ENCODE measurements at regions of chr19 and their contacts with region 1.

Region 1: DNA sequence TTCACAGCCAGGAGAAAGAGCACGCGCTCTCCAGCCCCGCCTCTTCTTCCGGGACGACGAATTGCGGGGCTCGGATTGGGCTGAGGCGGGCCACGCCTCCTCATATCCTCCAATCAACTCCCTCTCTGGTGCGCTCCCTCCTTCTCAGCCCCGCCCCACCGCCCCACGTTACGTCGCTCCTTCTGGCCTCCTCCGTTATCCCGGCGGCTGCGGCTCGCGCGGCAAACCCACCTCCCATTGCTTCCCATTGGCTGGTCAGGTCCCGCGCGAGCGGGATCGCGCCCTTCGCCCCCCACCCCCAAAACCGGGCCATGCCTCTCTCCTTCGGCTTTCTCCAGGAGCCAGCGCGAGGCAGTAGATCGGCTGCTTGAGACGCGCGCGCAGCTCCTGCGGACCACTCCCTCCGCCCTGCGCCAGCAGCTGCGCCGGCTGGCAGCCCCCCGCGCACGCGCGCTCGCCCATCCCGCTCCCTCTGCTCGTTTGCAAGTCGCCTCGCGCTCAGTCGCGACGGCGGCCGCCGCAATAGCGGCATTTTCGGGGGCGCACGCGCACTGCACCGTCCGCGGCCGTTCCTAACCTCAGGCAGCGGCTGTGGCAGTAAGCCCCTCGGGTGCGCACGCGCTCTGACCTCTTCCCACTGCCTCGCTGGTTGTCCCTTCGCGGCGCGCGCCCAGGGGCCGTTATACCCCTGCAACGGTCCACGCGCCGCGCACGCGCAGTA is 512 bp upstream of the ARHGAP35 start:
- DNase-seq: peak; percentile 98 to 100
- ATAC-seq: peak; percentile 75 to 86
- H3K4me3 ChIP-seq: peak overlapping the region; percentile 94
- H3K27ac ChIP-seq: peak overlapping the region; percentile 99
- H3K4me1 ChIP-seq: peaks cover 55% of the 10 kb centered on the region
- CTCF ChIP-seq: no peak
- EP300 ChIP-seq: peak in 1 of 2 experiments; percentile 13; a peak in 1 of 5 replicates
- POLR2A ChIP-seq: peak; percentile 91; the same call in 1 of the 2 replicates
- RAD21 ChIP-seq: peak in 1 of 2 experiments; percentile 23; a peak in 1 of 5 replicates

Region 2: DNA sequence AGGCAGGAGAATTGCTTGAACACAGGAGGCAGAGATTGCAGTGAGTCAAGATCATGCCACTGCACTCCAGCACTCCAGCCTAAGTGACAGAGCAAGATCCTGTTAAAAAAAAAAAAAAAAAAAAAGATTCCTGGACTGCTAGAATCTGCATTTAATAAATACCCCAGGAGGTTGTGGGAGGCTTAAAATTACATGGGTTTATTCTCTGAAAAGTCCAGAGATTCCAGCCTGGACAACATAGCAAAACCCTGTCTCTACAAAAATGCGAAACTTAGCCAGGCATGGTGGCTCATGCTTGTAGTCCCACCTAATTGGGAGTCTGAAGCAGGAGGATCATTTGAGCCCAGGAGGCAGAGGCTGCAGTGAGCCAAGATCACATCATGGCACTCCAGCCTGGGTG is 62.4 kb before region 1 on chr19:
- CTCF ChIA-PET with region 1: no interaction called
- POLR2A ChIA-PET with region 1: no interaction called
- DNase-seq: no peak
- ATAC-seq: no peak
- H3K4me3 ChIP-seq: no peak overlapping the region
- H3K27ac ChIP-seq: no peak overlapping the region
- H3K4me1 ChIP-seq: peaks cover 26% of the 10 kb centered on the region
- CTCF ChIP-seq: no peak
- EP300 ChIP-seq: no peak
- POLR2A ChIP-seq: no peak
- RAD21 ChIP-seq: no peak

Region 3: GRCh38 chr19:46878613-46879375 is 18.5 kb after region 1 on chr19:
- CTCF ChIA-PET with region 1: interaction called, 11 read pairs
- POLR2A ChIA-PET with region 1: interaction called, 6 read pairs
- DNase-seq: no peak
- ATAC-seq: peak; percentile 81 to 90
- H3K4me3 ChIP-seq: no peak overlapping the region
- H3K27ac ChIP-seq: peak overlapping the region; percentile 3 to 79; a peak in 4 of 6 replicates
- H3K4me1 ChIP-seq: peaks cover 65% of the 10 kb centered on the region
- CTCF ChIP-seq: no peak
- EP300 ChIP-seq: no peak
- POLR2A ChIP-seq: no peak
- RAD21 ChIP-seq: no peak

Region 4: GRCh38 chr19:46898731-46899130 is 38.4 kb after region 1 on chr19:
- CTCF ChIA-PET with region 1: interaction called, 12 read pairs
- POLR2A ChIA-PET with region 1: interaction called, 7 read pairs
- DNase-seq: no peak
- ATAC-seq: peak in 1 of 2 experiments; percentile 49; a peak in 3 of 6 replicates
- H3K4me3 ChIP-seq: no peak overlapping the region
- H3K27ac ChIP-seq: no peak overlapping the region
- H3K4me1 ChIP-seq: peaks cover 53% of the 10 kb centered on the region
- CTCF ChIP-seq: no peak
- EP300 ChIP-seq: no peak
- POLR2A ChIP-seq: no peak
- RAD21 ChIP-seq: no peak

Region 5: GRCh38 chr19:46924874-46925547 is 64.7 kb after region 1 on chr19:
- CTCF ChIA-PET with region 1: interaction called, 19 read pairs
- POLR2A ChIA-PET with region 1: interaction called, 3 read pairs
- DNase-seq: peak; percentile 40 to 70
- ATAC-seq: peak; percentile 72 to 78
- H3K4me3 ChIP-seq: peak overlapping the region; percentile 1; the same call in 1 of the 3 replicates
- H3K27ac ChIP-seq: peak overlapping the region; percentile 66 to 81
- H3K4me1 ChIP-seq: peaks cover 64% of the 10 kb centered on the region
- CTCF ChIP-seq: no peak
- EP300 ChIP-seq: no peak
- POLR2A ChIP-seq: no peak
- RAD21 ChIP-seq: no peak; a peak in 1 of 5 replicates

Region 6: DNA sequence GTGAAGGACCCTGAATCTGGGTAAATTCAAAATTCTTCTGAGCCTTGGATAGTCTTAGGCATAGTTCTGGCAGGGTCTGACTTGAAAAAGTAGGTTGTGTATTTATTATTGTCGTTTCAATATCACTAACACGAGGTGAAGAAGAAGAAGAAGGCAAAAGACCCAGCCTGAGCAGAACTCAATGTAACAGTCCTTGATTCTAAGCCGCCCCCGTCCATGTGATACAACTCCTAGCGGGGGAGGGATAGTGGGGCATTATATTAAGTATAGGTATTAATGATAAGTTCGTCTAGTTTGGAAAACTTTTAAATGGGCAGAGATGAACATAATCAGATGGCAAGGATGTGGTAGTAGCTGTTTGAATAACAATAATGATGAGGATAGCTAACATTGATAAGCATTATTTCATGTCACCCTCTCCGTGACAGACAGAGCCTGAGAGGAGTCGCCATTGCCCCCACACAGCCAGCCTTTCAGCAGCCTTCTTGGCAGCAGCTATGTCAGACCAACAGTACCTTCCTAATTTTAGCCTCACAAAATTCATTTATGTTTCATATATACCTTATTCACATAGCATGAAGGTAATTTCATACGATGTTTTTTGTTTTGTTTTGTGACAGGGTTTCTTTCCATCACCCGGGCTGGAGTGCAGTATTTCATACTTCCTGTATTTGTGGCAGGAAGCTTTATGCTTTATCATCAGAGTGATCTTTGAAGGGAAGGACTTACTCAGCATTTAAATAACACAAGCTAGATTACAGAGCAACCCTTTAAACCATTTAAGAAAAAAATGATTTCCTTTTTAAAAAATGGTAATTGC is 94.9 kb after region 1 on chr19:
- CTCF ChIA-PET with region 1: interaction called, 21 read pairs
- POLR2A ChIA-PET with region 1: interaction called, 3 read pairs
- DNase-seq: no peak
- ATAC-seq: no peak
- H3K4me3 ChIP-seq: no peak overlapping the region
- H3K27ac ChIP-seq: peak overlapping the region; percentile 2 to 49; a peak in 2 of 6 replicates
- H3K4me1 ChIP-seq: peaks cover 54% of the 10 kb centered on the region
- CTCF ChIP-seq: no peak
- EP300 ChIP-seq: no peak
- POLR2A ChIP-seq: no peak
- RAD21 ChIP-seq: no peak

Region 7: GRCh38 chr19:47005873-47006272 is 145.6 kb after region 1 on chr19:
- CTCF ChIA-PET with region 1: interaction called, 88 read pairs
- POLR2A ChIA-PET with region 1: interaction called, 3 read pairs
- DNase-seq: peak in 1 of 2 experiments; percentile 67
- ATAC-seq: peak; percentile 6 to 32; a peak in 3 of 6 replicates
- H3K4me3 ChIP-seq: no peak overlapping the region
- H3K27ac ChIP-seq: no peak overlapping the region
- H3K4me1 ChIP-seq: peaks cover 4% of the 10 kb centered on the region; the same call in 1 of the 3 replicates
- CTCF ChIP-seq: no peak
- EP300 ChIP-seq: no peak
- POLR2A ChIP-seq: no peak
- RAD21 ChIP-seq: no peak

Region 8: DNA sequence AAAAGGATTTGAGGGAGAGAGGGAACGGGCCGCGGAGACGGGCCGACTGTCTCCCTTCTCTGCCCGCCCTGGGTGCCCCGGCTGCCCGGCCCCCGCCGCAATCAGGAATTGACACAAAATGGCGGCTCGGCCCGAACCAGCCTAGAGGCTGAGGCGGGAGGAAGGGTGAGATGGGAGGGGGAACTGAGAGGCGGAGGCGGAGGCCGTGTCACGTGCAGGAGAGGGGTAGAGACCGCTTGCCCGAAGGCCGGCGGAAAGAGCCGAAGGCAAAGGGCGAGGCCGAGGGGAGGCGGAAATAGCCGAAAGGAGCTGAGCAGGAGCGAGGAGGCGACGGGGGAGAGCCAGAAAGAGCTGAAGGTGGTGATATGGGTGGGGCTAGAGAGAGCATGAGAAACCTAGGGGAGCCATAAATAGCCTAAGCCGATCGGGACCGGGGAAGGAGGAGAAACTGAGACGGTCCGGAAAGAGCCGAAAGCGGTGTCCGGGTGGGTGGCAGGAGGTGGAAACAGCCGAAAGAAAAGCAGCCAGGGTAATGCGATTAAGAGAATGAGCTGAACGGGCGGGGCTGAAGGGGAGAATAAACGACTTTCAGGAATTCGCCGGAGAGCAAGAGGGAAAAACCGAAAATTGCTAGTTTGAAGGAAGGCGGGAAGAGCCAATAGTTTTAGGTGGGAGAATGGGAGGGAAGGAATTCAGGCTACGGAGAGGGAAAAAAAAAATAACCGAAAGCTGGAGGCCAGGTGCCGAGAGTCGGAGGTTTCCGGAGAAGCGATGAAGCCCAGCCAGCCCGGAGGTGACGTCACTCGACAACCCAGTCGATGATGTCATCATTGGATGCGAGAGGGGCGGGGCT is 252.9 kb after region 1 on chr19 and contains the start of gene ZC3H4:
- CTCF ChIA-PET with region 1: no interaction called
- POLR2A ChIA-PET with region 1: interaction called, 11 read pairs
- DNase-seq: peak; percentile 99 to 100
- ATAC-seq: peak; percentile 81 to 92
- H3K4me3 ChIP-seq: peak within 1 kb of the TSS; percentile 98
- H3K27ac ChIP-seq: peak within 1 kb of the TSS; percentile 99
- H3K4me1 ChIP-seq: peaks cover 27% of the 10 kb centered on the region
- CTCF ChIP-seq: no peak
- EP300 ChIP-seq: no peak
- POLR2A ChIP-seq: peak; percentile 75
- RAD21 ChIP-seq: no peak
- polyA plus RNA-seq, gene ZC3H4: 7.7 and 9.6 TPM in 2 replicates

Measured in A549 (cell line).